ENCODE measurements at regions of chr2 and their contacts with region 1.

Region 1: GRCh38 chr2:25376750-25377621 is 35.3 kb upstream of the DNMT3A start:
- DNase-seq: peak; percentile 95

Region 2: GRCh38 chr2:25514043-25514637 is 137.2 kb after region 1 on chr2:
- intact Hi-C with region 1: loop called in 1 of 2 experiments (anchors 10 kb)
- DNase-seq: no peak

Measured in posterior vena cava (tissue), 2 donors.